Uterus (tissue), 4 donors: ENCODE measurements at regions of chr4 and their contacts with region 1.

Region 1: DNA sequence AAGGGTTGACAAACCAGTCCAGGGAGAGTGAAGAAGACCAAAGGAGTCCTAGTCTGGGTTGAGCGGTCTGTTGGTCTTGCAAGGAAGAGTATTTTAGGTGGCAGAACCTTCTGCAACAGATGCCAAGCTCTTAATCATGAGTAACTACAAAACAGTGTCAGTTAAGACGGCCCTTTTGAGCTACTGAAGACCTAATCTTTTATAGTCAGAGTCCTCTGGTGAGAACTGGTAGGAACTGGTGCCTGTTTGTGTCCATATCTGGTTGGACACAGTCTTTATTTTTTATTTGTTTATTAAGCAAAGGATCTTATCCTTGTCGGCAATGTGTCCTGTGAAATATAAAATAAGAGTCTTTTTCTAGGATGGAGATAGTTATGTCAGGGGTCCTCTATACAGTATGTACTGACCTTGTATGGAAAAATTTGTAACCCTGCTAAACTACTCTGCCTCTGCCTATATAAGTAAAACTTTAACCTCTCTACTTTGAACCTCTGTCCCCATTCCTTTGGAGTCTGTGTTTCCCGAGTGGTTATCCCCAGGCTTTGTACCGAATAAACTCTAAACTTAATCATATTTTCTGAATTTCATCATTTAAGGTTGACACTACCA is 47.1 kb downstream of the FAM13A start:
- DNase-seq: no peak
- H3K4me3 ChIP-seq: no peak overlapping the region
- H3K27ac ChIP-seq: no peak overlapping the region
- H3K4me1 ChIP-seq: no peaks in the 10 kb centered on the region
- H3K27me3 ChIP-seq: no peaks in the 10 kb centered on the region
- CTCF ChIP-seq: no peak
- POLR2A ChIP-seq: no peak

Region 2: DNA sequence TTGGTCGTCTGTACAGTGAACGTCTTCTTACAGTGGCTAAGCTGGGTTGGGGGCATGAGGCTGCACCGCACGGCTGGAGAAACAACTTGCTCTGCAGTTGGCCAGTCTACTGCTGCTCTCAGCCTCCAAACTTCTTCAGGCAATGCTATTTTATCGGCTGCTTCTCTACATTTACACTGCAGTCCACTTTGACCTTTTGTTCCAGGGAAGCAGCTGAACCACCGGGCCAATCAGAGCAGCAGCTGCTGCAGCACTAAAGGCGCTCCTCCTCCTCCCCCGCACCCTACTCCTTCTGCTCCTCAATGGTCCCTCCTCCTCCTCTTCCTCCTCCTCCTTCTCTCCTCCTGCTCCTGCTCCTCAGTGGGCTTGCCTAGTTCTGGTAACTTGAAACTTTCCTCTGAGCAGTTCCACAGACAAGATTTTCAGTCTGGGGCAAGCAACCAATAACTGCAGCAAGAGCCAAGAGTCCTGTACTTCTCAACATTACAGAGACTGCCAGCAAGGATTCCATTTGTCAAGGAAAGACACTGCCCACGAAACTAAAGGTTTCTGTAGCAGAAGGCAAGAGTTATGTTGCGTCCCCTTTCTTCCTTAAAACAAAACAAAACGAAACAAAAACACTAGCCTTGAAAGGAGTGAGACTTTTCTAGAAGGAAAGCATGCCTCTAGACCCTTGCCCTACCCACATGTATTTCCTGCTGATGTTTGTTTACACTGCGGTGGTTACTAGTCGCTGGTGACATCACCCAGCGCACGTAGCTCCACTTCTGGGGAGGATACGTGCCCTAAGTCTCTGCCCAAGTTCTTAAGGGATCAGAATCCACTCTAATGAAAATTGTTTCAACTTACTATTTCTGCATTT is 186.6 kb before region 1 on chr4:
- intact Hi-C with region 1: loop called (anchors 10 kb)
- DNase-seq: peak; percentile 86 to 94
- H3K4me3 ChIP-seq: peak overlapping the region; percentile 44 to 51
- H3K27ac ChIP-seq: peak overlapping the region; percentile 78 to 95
- H3K4me1 ChIP-seq: peaks cover 0 to 2% of the 10 kb centered on the region in 2 donors
- H3K27me3 ChIP-seq: no peaks in the 10 kb centered on the region
- CTCF ChIP-seq: no peak
- POLR2A ChIP-seq: peak; percentile 44 to 58